ENCODE measurements at regions of chr1 and their contacts with region 1.

Region 1: DNA sequence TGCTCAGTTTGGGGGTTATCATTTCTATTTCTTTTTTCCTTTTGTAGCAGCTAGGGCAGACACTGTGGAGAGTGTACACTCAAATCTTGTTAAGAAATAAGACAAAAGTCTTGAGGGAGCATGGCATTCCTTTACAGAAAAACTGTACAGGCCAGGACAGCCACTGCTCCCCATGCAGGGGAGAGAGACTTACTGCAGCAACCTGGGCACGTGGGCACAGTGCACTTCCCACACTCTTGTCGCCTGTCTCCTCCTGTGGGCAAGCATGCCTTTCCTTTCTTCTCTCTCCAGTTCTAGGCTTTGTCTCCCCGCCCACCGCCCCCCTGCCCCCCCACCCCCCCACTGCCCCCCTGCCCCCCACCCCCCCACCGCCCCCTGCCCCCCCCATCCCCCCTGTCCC is 51.9 kb downstream of the PHC2 start:
- DNase-seq: no peak
- ATAC-seq: no peak

Region 2: GRCh38 chr1:33273406-33273805 is 105.6 kb before region 1 on chr1:
- intact Hi-C with region 1: no loop called
- DNase-seq: peak in 1 of 2 donors; percentile 9
- ATAC-seq: no peak

Region 3: GRCh38 chr1:33460947-33461629 is 82.1 kb after region 1 on chr1:
- intact Hi-C with region 1: loop called in 1 of 2 experiments (anchors 10 kb)
- DNase-seq: peak; percentile 36 to 51
- ATAC-seq: no peak

Measured in left colon (tissue), 2 donors.